ENCODE measurements at regions of chr1 and their contacts with region 1.

Region 1: GRCh38 chr1:168136709-168137514 is at the start of gene GPR161:
- DNase-seq: peak; percentile 47
- H3K4me3 ChIP-seq: peak within 1 kb of the TSS; percentile 69 to 77
- H3K27ac ChIP-seq: peak within 1 kb of the TSS; percentile 88 to 93
- H3K4me1 ChIP-seq: no peaks in the 10 kb centered on the region
- H3K27me3 ChIP-seq: no peaks in the 10 kb centered on the region
- CTCF ChIP-seq: no peak
- POLR2A ChIP-seq: no peak
- total RNA-seq, gene GPR161: 6.1 to 6.7 TPM

Region 2: DNA sequence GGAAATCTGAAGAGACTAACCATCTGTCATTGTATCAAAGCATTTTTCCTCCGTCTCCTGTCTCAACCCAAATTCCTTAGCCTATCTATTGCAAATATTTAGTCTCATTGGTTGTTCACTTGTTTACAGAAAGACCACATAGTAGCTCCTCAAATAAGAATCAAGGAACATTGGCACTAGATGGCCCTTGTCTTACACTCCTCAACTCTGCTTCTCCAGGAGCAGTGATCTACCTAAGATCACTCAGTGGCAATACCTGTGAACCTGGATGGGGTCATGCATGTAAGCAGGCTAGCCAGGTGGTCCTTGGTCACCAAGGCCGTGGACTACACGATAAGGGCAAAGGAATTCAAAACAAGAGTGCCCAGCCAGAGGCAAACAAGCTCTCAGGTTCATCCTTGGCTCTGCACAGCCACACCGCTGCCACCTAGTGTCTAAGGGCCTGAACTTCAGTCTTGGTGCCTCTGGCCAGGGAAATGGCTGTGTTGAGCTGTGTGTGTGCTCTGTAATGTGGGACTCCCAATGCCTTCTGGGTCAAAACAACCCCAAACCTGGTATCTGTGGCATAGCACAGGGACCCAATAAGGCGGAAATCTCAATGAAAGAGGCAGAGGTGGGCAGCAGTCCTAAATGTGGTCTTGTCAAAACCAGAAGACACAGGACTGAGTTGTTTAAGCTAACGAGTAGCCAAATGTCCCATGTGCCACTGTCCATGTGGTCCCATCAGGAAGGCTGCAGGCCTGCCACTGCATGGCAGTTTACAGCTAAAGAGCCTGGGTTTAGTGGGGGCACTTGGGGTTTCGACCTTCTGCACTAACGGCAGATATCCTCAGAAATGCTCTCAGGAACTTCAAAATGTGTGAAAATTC is 54.7 kb before region 1 on chr1:
- intact Hi-C with region 1: loop called (anchors 10 kb)
- DNase-seq: peak; percentile 87
- H3K4me3 ChIP-seq: no peak overlapping the region
- H3K27ac ChIP-seq: no peak overlapping the region
- H3K4me1 ChIP-seq: peaks cover 20% of the 10 kb centered on the region
- H3K27me3 ChIP-seq: no peaks in the 10 kb centered on the region
- CTCF ChIP-seq: peak; percentile 60 to 78 (median 75)
- POLR2A ChIP-seq: no peak

Measured in testis (tissue), 5 donors.